ENCODE measurements at regions of chr19 and their contacts with region 1.

Region 1: GRCh38 chr19:6744381-6745291 is 5.2 kb downstream of the TRIP10 start:
- DNase-seq: peak; percentile 89 to 96
- ATAC-seq: peak; percentile 88
- H3K4me3 ChIP-seq: no peak overlapping the region
- H3K27ac ChIP-seq: peak overlapping the region; percentile 20 to 88
- H3K4me1 ChIP-seq: no peaks in the 10 kb centered on the region
- H3K27me3 ChIP-seq: no peaks in the 10 kb centered on the region

Region 2: GRCh38 chr19:6572217-6572616 is 172.4 kb before region 1 on chr19:
- intact Hi-C with region 1: no loop called
- DNase-seq: peak in 1 of 2 donors; percentile 85
- ATAC-seq: peak; percentile 52
- H3K4me3 ChIP-seq: no peak overlapping the region
- H3K27ac ChIP-seq: no peak overlapping the region
- H3K4me1 ChIP-seq: no peaks in the 10 kb centered on the region
- H3K27me3 ChIP-seq: no peaks in the 10 kb centered on the region

Region 3: GRCh38 chr19:6685962-6686627 is 58.5 kb before region 1 on chr19:
- intact Hi-C with region 1: no loop called
- DNase-seq: peak; percentile 21 to 40
- ATAC-seq: no peak
- H3K4me3 ChIP-seq: no peak overlapping the region
- H3K27ac ChIP-seq: no peak overlapping the region
- H3K4me1 ChIP-seq: no peaks in the 10 kb centered on the region
- H3K27me3 ChIP-seq: no peaks in the 10 kb centered on the region

Region 4: DNA sequence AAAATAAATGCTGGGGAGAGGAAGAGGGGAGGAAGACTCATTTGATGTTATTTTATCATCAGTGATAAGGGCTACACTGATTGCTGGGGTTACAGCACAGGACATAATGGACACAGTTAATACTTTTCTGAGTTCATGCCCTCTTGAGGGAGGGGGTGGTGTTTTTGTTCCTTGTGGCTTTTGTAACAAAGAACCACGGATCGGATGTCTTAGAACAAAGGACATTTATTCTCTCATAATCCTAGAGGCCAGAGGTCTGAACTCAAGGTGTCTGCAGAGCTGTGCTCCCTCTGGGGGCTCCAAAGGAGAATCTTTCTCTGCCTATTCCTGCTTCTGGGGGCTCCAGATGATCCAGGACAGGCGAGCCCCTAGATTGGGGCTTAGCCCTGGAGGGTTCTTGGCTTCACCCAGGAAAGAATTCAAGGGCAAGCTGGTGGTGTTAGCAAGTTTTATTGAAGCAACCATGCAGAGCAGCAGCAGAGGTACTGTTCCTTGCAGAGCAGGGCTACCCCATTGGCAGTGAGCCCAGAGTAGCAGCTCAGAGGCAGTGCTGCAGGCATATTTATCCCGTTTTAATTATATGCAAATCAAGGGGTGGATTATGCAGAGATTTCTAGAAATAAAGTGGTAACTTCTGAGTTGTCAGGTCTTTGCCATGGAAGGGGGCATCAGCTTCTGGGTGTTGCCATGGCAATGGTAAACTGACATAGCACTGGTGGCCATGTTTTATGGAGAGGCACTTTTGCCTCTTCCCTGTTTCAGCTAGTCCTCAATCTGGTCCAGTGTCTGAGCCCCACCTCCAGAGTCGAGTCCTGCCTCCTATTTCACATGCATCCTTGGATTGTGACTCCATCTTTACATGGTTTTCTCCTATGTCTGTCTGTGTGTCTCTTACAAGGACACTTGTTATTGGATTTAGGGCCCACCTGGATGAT is 45.8 kb after region 1 on chr19:
- intact Hi-C with region 1: no loop called
- DNase-seq: no peak
- ATAC-seq: no peak
- H3K4me3 ChIP-seq: no peak overlapping the region
- H3K27ac ChIP-seq: no peak overlapping the region
- H3K4me1 ChIP-seq: no peaks in the 10 kb centered on the region
- H3K27me3 ChIP-seq: no peaks in the 10 kb centered on the region

Region 5: DNA sequence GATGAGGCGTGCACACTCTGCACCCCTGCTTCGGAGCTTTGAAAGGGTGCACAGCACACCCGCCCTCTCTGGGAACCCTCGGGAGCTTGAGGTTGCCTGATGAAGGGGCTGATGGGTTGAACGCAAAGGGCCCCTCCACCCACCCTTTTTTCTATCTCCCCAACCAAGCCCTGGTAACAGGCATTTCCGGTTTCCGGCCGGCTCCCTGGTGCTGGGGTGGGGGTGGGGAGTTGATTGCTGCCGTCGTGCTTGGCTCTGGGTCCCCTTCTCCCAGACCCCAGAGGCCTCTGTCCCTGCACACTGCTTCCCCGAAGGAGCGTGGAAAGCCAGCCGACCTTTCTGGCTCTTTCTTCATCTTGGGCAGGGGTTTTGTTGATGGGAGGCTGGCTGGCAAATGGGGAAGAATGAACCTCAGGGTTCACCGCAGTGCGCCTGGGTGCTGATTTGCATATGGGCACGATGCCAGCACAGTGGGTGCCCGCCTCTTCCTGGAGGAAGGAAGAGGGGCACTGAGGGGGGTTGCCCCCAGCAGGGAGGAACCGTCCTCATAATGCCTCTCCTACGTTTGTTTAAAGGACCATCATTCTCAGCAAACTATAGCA is 57.0 kb after region 1 on chr19:
- intact Hi-C with region 1: loop called in 1 of 2 experiments (anchors 2 kb)
- DNase-seq: peak; percentile 79 to 91
- ATAC-seq: peak; percentile 69
- H3K4me3 ChIP-seq: no peak overlapping the region
- H3K27ac ChIP-seq: peak overlapping the region in 1 of 2 donors; percentile 55
- H3K4me1 ChIP-seq: no peaks in the 10 kb centered on the region
- H3K27me3 ChIP-seq: no peaks in the 10 kb centered on the region

Measured in aorta (tissue), 5 donors.